ENCODE measurements at regions of chr3 and their contacts with region 1.

Region 1: GRCh38 chr3:139329345-139329850 is 14.4 kb upstream of the MRPS22 start:
- DNase-seq: peak; percentile 79 to 82 (median 81)
- H3K4me3 ChIP-seq: peak overlapping the region in 1 of 2 donors; percentile 8
- H3K4me3 Mint-ChIP-seq: peak overlapping the region; percentile 66 to 84 (median 78)
- H3K27ac ChIP-seq: no peak overlapping the region
- H3K27ac Mint-ChIP-seq: no peak overlapping the region
- H3K4me1 ChIP-seq: peaks cover 5% of the 10 kb centered on the region
- H3K4me1 Mint-ChIP-seq: peaks cover 5 to 20% (median 12%) of the 10 kb centered on the region in 4 donors
- H3K27me3 ChIP-seq: peaks cover 4% of the 10 kb centered on the region
- H3K27me3 Mint-ChIP-seq: peaks cover 22 to 26% of the 10 kb centered on the region in 2 donors

Region 2: DNA sequence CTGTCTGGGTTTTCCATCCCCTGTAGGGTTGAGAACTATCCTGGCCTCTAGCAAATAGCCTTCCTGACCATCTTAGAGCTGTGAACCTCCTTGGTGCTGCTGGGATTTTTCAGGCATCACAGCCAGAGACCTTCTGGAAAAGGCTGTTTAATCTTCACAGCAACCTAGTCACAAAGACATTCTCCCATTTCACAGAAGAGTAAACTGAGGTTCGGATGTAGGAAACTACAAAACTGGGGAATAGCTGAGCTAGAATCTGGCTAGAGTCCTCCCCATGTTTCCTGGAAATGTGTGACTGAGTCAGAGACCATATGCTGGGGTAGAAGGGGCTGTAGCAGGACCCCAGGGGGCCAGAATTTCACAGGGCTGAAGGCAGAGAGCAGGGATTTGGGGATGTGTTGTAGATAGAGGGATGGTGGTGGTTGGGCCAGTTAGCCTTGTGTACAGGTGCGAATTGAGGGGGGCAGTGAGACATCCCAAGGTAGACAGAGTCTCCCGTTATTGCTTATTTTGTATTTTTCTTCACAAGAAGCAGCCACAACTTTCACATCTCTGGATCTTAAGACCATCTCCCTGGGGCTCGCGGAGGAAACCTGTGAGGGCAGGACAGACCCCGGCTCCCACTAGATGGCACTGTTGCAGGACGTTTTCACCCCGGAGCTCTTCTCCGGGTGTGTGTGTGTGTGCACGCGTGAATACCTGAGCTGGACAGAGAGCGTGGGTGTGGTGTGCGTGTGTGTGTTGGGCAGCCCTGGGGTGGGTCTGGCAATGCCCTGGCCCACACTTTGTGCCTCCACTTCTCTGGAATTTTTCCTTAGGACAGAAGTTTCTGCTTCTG is 217.8 kb before region 1 on chr3:
- CTCF ChIA-PET with region 1: interaction called, 34 read pairs
- POLR2A ChIA-PET with region 1: no interaction called
- intact Hi-C with region 1: no loop called
- DNase-seq: peak in 4 of 5 donors; percentile 30 to 39 (median 36)
- H3K4me3 ChIP-seq: no peak overlapping the region
- H3K4me3 Mint-ChIP-seq: peak overlapping the region in 1 of 8 donors; percentile 5
- H3K27ac ChIP-seq: no peak overlapping the region
- H3K27ac Mint-ChIP-seq: no peak overlapping the region
- H3K4me1 ChIP-seq: no peaks in the 10 kb centered on the region
- H3K4me1 Mint-ChIP-seq: peaks cover 5 to 19% (median 9%) of the 10 kb centered on the region in 4 donors
- H3K27me3 ChIP-seq: no peaks in the 10 kb centered on the region
- H3K27me3 Mint-ChIP-seq: peaks cover 2 to 18% of the 10 kb centered on the region in 2 donors

Region 3: GRCh38 chr3:139140553-139140952 is 188.8 kb before region 1 on chr3:
- CTCF ChIA-PET with region 1: no interaction called
- POLR2A ChIA-PET with region 1: no interaction called
- intact Hi-C with region 1: no loop called
- DNase-seq: no peak
- H3K4me3 ChIP-seq: no peak overlapping the region
- H3K4me3 Mint-ChIP-seq: no peak overlapping the region
- H3K27ac ChIP-seq: no peak overlapping the region
- H3K27ac Mint-ChIP-seq: no peak overlapping the region
- H3K4me1 ChIP-seq: no peaks in the 10 kb centered on the region
- H3K4me1 Mint-ChIP-seq: no peaks in the 10 kb centered on the region
- H3K27me3 ChIP-seq: no peaks in the 10 kb centered on the region
- H3K27me3 Mint-ChIP-seq: peaks cover 0 to 8% of the 10 kb centered on the region in 2 donors

Region 4: DNA sequence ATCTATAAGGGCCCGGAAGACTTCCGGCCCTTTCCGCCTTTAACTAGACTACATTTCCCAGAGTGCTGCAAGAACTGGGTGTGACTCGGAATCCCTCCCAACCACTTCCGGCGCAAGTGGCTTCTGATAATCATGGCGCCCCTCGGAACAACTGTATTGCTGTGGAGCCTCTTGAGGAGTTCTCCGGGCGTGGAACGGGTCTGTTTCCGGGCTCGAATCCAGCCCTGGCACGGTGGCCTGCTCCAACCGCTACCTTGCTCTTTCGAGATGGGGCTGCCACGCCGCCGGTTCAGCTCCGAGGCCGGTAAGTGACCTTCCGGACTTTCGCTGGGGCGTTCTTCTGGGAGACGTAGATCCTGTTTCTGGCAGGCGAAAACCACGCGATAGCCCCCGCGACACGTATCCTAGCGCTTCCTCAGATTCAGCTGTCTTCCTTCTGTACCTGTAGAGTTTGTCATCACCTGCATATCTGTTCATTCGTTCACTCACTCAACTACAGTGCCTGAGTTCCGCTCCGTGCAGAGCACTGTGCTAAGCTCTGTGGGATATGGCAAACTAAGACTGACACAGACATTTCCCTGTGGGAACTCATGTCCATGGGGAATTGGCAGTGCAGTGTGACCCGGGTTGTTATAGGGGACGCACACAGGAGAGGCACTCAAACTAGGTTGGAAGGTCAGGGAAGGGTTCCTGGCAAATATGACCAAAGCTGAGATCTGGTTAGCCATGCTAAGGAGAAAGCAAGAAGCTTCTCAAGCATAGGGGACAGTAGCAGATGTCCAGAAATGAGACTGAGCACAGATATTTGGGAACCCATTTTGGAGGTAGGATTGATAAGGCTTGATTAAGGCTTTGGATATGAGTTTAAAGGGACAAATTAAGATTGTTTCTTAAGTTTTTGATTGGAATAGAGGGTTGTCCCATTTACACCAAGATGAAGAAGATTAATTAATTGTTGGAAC is 14.8 kb after region 1 on chr3 and contains the start of gene MRPS22:
- CTCF ChIA-PET with region 1: interaction called, 18 read pairs
- POLR2A ChIA-PET with region 1: no interaction called
- intact Hi-C with region 1: no loop called
- DNase-seq: peak; percentile 84 to 90 (median 84)
- H3K4me3 ChIP-seq: peak within 1 kb of the TSS; percentile 66 to 95
- H3K4me3 Mint-ChIP-seq: peak within 1 kb of the TSS in 2 of 8 donors; percentile 67 to 71
- H3K27ac ChIP-seq: peak within 1 kb of the TSS; percentile 79
- H3K27ac Mint-ChIP-seq: peak within 1 kb of the TSS in 3 of 7 donors; percentile 78 to 89 (median 81)
- H3K4me1 ChIP-seq: peaks cover 24% of the 10 kb centered on the region
- H3K4me1 Mint-ChIP-seq: peaks cover 3 to 11% (median 7%) of the 10 kb centered on the region in 4 donors
- H3K27me3 ChIP-seq: peaks cover 4% of the 10 kb centered on the region
- H3K27me3 Mint-ChIP-seq: peaks cover 0 to 7% of the 10 kb centered on the region in 2 donors
- total RNA-seq, gene MRPS22: 33.4 to 36.9 TPM

Region 5: GRCh38 chr3:139689122-139689521 is 359.7 kb after region 1 on chr3:
- CTCF ChIA-PET with region 1: no interaction called
- POLR2A ChIA-PET with region 1: no interaction called
- intact Hi-C with region 1: no loop called
- DNase-seq: no peak
- H3K4me3 ChIP-seq: no peak overlapping the region
- H3K4me3 Mint-ChIP-seq: no peak overlapping the region
- H3K27ac ChIP-seq: no peak overlapping the region
- H3K27ac Mint-ChIP-seq: no peak overlapping the region
- H3K4me1 ChIP-seq: no peaks in the 10 kb centered on the region
- H3K4me1 Mint-ChIP-seq: no peaks in the 10 kb centered on the region
- H3K27me3 ChIP-seq: no peaks in the 10 kb centered on the region
- H3K27me3 Mint-ChIP-seq: peaks cover 6 to 10% of the 10 kb centered on the region in 2 donors